Activated T-helper 2 cell treated with anti-CD3 and anti-CD28 coated beads, Interferon-gamma antibody, Interleukin-2, Interleukin-4, amounts not matched to agents 10 μg/mL and 5 μg/mL and 100 μg/mL, durations not matched to agents 14 hours and 24 hours and 36 hours (primary cell): ENCODE measurements at regions of chr3 and their contacts with region 1.

Region 1: DNA sequence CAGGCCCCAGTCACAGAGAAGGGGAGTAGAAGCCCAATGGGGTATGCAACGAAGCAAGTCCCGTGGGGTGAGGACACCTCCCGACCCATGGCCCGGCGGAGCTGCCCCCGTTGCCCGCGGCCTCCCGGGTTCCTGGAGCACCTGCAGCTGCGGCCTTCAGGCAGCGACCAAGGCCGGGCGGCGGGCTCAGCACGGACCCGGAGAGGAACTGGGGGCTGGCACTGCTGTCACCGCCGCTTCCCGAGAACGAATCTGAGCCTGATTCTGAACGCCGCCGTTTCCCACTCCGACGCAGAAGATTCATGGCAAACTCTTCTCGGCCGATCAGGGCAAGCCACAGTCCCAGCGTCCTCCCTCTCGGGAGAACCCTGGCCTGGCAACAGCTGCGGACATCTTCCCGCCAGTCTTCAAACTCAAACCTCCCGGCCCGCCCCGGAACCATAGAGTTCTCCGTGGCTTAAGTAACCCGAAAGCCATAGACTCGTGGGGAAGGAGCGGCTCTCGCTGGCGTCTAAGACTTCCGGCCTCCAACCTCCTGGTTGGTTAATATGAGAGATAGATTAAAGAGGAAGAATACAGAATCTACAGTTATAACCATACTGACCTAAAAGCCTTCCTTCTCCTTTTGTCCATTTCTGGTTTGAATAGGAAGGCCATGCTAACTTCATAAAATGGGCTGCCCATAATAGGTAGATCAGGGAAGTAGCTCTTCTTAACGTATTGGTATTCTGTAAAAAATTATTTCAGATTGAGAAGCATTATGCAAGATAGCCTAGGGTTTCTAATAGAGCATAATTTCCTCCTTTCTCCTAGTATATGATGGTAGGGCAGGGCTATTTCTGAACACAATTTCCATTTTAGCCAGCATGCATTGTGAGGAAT is at the start of gene POLQ:
- DNase-seq: peak; percentile 84
- H3K4me3 Mint-ChIP-seq: peak within 1 kb of the TSS; percentile 91
- H3K27ac Mint-ChIP-seq: peak within 1 kb of the TSS; percentile 93
- H3K4me1 Mint-ChIP-seq: peaks cover 30% of the 10 kb centered on the region
- H3K27me3 Mint-ChIP-seq: no peaks in the 10 kb centered on the region
- total RNA-seq, gene POLQ: 23.8 and 24.0 TPM in 2 replicates

Region 2: DNA sequence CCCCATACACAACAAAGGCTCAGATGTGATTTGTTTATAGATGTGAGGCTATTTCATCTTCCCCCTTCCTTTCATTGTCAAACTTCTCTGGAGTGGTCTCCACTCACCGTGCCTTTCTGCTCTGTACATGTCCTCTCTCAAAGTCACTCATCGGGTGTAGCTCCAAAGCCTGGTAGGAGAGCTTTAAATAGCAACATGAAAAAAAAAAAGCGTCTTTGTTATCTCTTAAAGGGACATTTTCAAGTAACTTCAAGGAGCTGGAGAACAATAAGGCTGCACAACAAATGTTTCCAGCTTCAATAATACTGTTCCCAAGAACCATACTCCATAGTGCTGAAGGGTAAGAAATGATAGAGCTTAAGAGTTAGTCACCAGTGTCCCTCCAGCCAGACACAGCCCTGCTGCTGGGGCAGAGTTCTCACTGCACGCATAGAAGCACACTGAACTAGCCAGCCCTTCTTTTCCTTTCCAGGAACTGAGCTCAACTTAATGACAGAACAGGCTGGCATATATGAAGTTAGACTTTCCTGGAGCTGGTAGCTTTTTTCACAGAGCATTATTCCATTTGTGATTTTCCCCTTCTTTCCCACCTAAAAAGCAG is 55.5 kb after region 1 on chr3:
- intact Hi-C with region 1: no loop called
- DNase-seq: no peak
- H3K4me3 Mint-ChIP-seq: no peak overlapping the region
- H3K27ac Mint-ChIP-seq: no peak overlapping the region
- H3K4me1 Mint-ChIP-seq: no peaks in the 10 kb centered on the region
- H3K27me3 Mint-ChIP-seq: peaks cover 5% of the 10 kb centered on the region

Region 3: GRCh38 chr3:121834696-121835464 is 289.1 kb after region 1 on chr3 and contains the starts of genes EAF2 and IQCB1:
- intact Hi-C with region 1: loop called (anchors 1 kb)
- DNase-seq: peak; percentile 96
- H3K4me3 Mint-ChIP-seq: peak within 1 kb of the TSS; percentile 98
- H3K27ac Mint-ChIP-seq: peak within 1 kb of the TSS; percentile 97
- H3K4me1 Mint-ChIP-seq: peaks cover 61% of the 10 kb centered on the region
- H3K27me3 Mint-ChIP-seq: no peaks in the 10 kb centered on the region
- total RNA-seq, gene EAF2: 18.5 and 19.2 TPM in 2 replicates
- total RNA-seq, gene IQCB1: 43.4 and 44.0 TPM in 2 replicates

Region 4: DNA sequence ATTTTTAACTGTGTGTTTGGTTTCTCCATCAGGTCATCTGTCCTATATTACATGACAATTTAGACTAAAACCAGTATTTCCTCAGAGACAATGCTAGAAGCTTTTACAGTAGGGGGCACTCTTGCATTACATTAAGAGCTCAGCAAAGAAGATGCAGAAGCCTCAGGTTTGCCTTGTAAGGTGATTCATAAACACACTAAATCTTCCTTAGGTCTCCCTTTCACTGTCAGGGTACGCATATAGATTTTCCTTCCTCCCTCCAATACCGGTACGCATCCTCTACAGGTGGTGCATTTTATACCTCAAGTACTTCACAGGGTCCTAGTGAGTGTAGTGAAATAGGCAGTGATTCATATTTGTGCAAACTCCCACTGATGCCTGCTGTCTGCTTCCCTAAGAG is 555.8 kb after region 1 on chr3:
- intact Hi-C with region 1: loop called (anchors 1 kb)
- DNase-seq: no peak
- H3K4me3 Mint-ChIP-seq: no peak overlapping the region
- H3K27ac Mint-ChIP-seq: peak overlapping the region; percentile 62
- H3K4me1 Mint-ChIP-seq: peaks cover 38% of the 10 kb centered on the region
- H3K27me3 Mint-ChIP-seq: no peaks in the 10 kb centered on the region

Region 5: DNA sequence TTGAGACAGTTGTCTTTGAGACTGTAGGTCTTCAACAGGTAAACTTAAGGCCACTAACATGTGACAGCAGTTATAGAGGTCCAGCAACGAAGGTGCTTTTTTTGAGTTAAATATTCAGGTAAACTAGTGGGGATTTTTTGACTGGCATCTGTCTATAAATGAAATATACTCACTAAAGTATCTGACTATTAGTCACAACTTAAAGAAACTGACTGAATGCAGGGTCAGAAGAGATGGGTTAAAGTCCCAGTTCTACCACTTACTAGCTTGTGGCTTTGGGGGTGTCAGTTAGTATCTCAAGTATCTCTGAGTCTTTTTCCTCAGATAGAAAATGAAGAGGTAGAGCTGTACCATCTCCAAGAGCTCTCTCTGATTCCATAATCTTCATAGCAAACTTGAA is 819.3 kb after region 1 on chr3:
- intact Hi-C with region 1: loop called (anchors 2 kb)
- DNase-seq: no peak
- H3K4me3 Mint-ChIP-seq: peak overlapping the region; percentile 14
- H3K27ac Mint-ChIP-seq: peak overlapping the region; percentile 92
- H3K4me1 Mint-ChIP-seq: peaks cover 41% of the 10 kb centered on the region
- H3K27me3 Mint-ChIP-seq: no peaks in the 10 kb centered on the region

Region 6: GRCh38 chr3:122793568-122794416 is 1248.0 kb after region 1 on chr3 and contains the start of gene HSPBAP1:
- intact Hi-C with region 1: loop called (anchors 10 kb)
- DNase-seq: peak; percentile 87
- H3K4me3 Mint-ChIP-seq: peak within 1 kb of the TSS; percentile 88
- H3K27ac Mint-ChIP-seq: peak within 1 kb of the TSS; percentile 77
- H3K4me1 Mint-ChIP-seq: peaks cover 32% of the 10 kb centered on the region
- H3K27me3 Mint-ChIP-seq: peaks cover 3% of the 10 kb centered on the region
- total RNA-seq, gene HSPBAP1: 6.6 and 8.0 TPM in 2 replicates